Activated T-helper 1 cell treated with anti-CD3 and anti-CD28 coated beads, Interleukin-12 subunit alpha, Interleukin-12 subunit beta, Interleukin-2, Interleukin-4 antibody, amounts not matched to agents 30 ng/mL and 10 ng/mL and 1 ng/mL, durations not matched to agents 14 hours and 24 hours and 36 hours (primary cell): ENCODE measurements at regions of chr1 and their contacts with region 1.

Region 1: GRCh38 chr1:199067483-199067882 is 428.6 kb downstream of the PTPRC start:
- DNase-seq: no peak
- H3K4me3 Mint-ChIP-seq: peak overlapping the region; percentile 38
- H3K27ac Mint-ChIP-seq: peak overlapping the region; percentile 21
- H3K4me1 Mint-ChIP-seq: peaks cover 50% of the 10 kb centered on the region
- H3K27me3 Mint-ChIP-seq: no peaks in the 10 kb centered on the region

Region 2: DNA sequence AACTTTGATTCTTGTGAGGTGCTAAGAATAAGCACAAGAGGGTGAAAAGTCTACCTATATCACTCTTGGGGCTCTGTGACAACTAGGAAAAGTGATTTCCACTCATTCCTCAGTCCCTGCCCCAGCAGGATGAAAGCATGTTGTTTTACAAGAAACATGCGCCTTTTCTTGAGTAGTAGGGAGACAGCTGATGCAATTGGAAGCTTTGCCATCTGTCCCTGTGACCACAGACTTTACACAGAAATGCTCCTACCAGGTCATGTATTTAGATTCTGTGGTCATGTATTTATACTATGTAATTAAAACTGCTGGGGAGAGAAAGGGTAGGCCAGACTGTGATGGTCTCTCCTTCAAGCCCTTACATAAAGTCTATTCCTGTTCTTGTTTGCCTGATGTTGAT is 16.8 kb after region 1 on chr1:
- intact Hi-C with region 1: loop called (anchors 2 kb)
- DNase-seq: no peak
- H3K4me3 Mint-ChIP-seq: no peak overlapping the region
- H3K27ac Mint-ChIP-seq: no peak overlapping the region
- H3K4me1 Mint-ChIP-seq: peaks cover 64% of the 10 kb centered on the region
- H3K27me3 Mint-ChIP-seq: peaks cover 2% of the 10 kb centered on the region

Region 3: GRCh38 chr1:199573047-199573446 is 505.6 kb after region 1 on chr1:
- intact Hi-C with region 1: no loop called
- DNase-seq: no peak
- H3K4me3 Mint-ChIP-seq: no peak overlapping the region
- H3K27ac Mint-ChIP-seq: no peak overlapping the region
- H3K4me1 Mint-ChIP-seq: no peaks in the 10 kb centered on the region
- H3K27me3 Mint-ChIP-seq: peaks cover 16% of the 10 kb centered on the region